PC-9 (cell line): ENCODE measurements at regions of chr19 and their contacts with region 1.

Region 1: GRCh38 chr19:44845612-44846454 is at the start of gene NECTIN2:
- DNase-seq: peak; percentile 93 to 100
- H3K4me3 ChIP-seq: peak within 1 kb of the TSS; percentile 83
- H3K27ac ChIP-seq: peak within 1 kb of the TSS; percentile 86
- H3K4me1 ChIP-seq: peaks cover 17% of the 10 kb centered on the region
- H3K27me3 ChIP-seq: no peaks in the 10 kb centered on the region
- CTCF ChIP-seq: peak; percentile 93
- total RNA-seq, gene NECTIN2: 115 and 136 TPM in 2 replicates

Region 2: DNA sequence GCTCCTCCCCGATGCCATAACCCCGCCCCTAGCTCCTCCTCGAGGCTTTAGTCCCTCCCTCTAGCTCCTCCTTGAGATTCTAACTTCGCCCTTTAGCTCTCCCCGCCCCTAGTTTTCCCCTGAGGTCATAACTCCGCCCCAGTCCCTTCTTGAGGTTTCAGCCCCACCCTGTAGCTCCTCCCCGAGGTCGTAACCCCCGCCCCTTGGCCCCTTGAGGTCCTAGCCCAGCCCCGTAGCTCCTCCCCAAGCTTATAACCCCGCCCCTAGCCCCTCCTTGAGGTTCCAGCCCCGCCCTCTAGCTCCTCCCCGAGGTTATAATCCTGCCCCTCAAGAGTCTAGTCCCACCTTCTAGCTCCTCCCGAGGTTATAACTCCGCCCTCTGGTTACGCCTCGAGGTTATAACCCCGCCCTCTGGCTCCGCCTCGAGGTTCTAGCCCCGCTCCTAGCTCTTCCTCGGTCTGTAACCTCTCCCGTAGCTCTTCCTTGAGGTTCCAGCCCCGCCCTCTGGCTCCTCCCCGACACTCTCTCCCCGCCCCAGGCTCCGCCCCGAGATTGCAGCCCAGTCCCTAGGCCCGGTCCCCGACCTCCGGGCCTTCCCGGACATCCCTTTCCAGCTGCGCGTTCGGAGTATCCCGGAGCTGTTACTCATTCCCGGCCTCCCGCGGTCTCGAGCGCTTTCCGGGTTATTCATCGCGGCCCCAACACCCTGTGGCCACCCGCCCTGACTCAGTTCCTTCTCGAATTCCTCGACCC is 1177.3 kb before region 1 on chr19:
- CTCF ChIA-PET with region 1: no interaction called
- POLR2A ChIA-PET with region 1: interaction called, 14 read pairs
- intact Hi-C with region 1: no loop called
- DNase-seq: peak; percentile 97 to 99
- H3K4me3 ChIP-seq: peak overlapping the region; percentile 92
- H3K27ac ChIP-seq: peak overlapping the region; percentile 86
- H3K4me1 ChIP-seq: peaks cover 31% of the 10 kb centered on the region
- H3K27me3 ChIP-seq: no peaks in the 10 kb centered on the region
- CTCF ChIP-seq: no peak

Region 3: GRCh38 chr19:44582581-44583265 is 263.1 kb before region 1 on chr19:
- CTCF ChIA-PET with region 1: interaction called, 28 read pairs
- POLR2A ChIA-PET with region 1: no interaction called
- intact Hi-C with region 1: loop called (anchors 5 kb)
- DNase-seq: no peak
- H3K4me3 ChIP-seq: no peak overlapping the region
- H3K27ac ChIP-seq: no peak overlapping the region
- H3K4me1 ChIP-seq: peaks cover 33% of the 10 kb centered on the region
- H3K27me3 ChIP-seq: no peaks in the 10 kb centered on the region
- CTCF ChIP-seq: peak; percentile 60

Region 4: GRCh38 chr19:44653977-44654774 is 191.7 kb before region 1 on chr19:
- CTCF ChIA-PET with region 1: no interaction called
- POLR2A ChIA-PET with region 1: no interaction called
- intact Hi-C with region 1: loop called (anchors 1 kb)
- DNase-seq: peak; percentile 76 to 84
- H3K4me3 ChIP-seq: no peak overlapping the region
- H3K27ac ChIP-seq: peak overlapping the region; percentile 33
- H3K4me1 ChIP-seq: peaks cover 8% of the 10 kb centered on the region; the same call in 1 of the 2 replicates
- H3K27me3 ChIP-seq: no peaks in the 10 kb centered on the region
- CTCF ChIP-seq: peak; percentile 77

Region 5: GRCh38 chr19:44723952-44724319 is 121.9 kb before region 1 on chr19:
- CTCF ChIA-PET with region 1: interaction called, 30 read pairs
- POLR2A ChIA-PET with region 1: interaction called, 3 read pairs
- intact Hi-C with region 1: loop called (anchors 2 kb)
- DNase-seq: peak; percentile 74 to 88
- H3K4me3 ChIP-seq: no peak overlapping the region
- H3K27ac ChIP-seq: peak overlapping the region; percentile 62
- H3K4me1 ChIP-seq: peaks cover 66% of the 10 kb centered on the region
- H3K27me3 ChIP-seq: no peaks in the 10 kb centered on the region
- CTCF ChIP-seq: peak; percentile 98

Region 6: DNA sequence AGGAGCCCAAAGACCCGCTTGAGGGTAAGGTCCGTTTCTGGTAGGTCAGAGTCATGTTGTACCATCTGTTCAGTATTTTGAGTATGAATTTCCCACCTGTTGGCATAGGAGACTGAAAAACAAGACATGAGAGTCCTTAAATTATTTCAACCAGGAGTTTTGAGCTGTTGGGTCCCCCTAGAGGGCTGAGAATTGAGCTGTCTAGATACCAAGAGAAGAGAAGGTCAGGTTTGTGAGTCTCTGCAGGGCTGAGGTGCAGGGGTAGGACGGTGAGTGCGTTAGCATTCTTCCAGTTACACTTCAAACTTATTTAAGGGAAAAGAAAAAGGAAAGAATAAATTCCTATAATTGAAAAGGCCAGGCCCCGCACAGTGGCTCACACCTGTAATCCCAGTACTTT is 63.1 kb before region 1 on chr19:
- CTCF ChIA-PET with region 1: interaction called, 3 read pairs
- POLR2A ChIA-PET with region 1: interaction called, 4 read pairs
- intact Hi-C with region 1: loop called (anchors 2 kb)
- DNase-seq: no peak
- H3K4me3 ChIP-seq: no peak overlapping the region
- H3K27ac ChIP-seq: 0 out of 2 replicates have a peak overlapping the region, but pooled peaks have one; percentile 40
- H3K4me1 ChIP-seq: peaks cover 32% of the 10 kb centered on the region
- H3K27me3 ChIP-seq: no peaks in the 10 kb centered on the region
- CTCF ChIP-seq: no peak; the same call in 1 of the 2 replicates

Region 7: DNA sequence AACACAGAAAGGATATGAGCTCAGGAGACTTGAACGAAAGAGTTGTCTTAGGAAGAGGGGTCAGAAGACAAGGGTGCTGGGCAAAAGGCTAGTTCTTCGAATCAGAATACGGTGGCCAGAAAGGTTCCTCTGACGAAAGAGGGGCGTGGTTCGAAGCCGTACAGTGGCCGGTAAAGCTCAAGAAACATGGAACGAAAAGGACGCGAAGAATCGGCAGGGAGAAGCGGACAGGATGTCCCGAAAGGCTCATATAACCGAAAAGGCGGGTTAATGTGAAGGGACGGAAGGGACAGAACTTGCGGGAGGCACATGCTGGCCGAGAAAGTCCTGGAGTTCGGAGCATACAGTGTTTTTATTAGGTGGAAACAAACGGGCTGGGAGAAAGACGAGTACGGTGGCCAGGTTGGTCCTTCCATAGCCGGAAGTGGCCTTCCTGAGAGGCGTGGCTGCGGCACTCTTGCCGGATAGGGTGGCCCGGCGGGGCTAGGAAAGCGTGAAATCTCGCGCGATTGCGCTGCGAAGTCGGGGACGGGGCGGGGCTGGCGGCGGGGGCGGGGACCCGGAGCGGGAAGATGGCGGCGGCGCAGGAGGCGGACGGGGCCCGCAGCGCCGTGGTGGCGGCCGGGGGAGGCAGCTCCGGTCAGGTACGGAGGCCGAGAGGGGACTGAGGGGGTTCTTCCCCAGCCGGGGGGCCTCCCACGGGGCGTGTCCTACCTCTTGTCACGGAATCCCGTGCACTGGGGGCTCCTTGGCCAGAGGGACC is 109.2 kb after region 1 on chr19 and contains the start of gene CLPTM1:
- CTCF ChIA-PET with region 1: no interaction called
- POLR2A ChIA-PET with region 1: no interaction called
- intact Hi-C with region 1: loop called (anchors 1 kb)
- DNase-seq: peak; percentile 93 to 94
- H3K4me3 ChIP-seq: peak within 1 kb of the TSS; percentile 89
- H3K27ac ChIP-seq: peak within 1 kb of the TSS; percentile 87
- H3K4me1 ChIP-seq: peaks cover 20% of the 10 kb centered on the region
- H3K27me3 ChIP-seq: no peaks in the 10 kb centered on the region
- CTCF ChIP-seq: no peak
- total RNA-seq, gene CLPTM1: 98.2 and 111 TPM in 2 replicates